ENCODE measurements at regions of chr9 and their contacts with region 1.

Region 1: DNA sequence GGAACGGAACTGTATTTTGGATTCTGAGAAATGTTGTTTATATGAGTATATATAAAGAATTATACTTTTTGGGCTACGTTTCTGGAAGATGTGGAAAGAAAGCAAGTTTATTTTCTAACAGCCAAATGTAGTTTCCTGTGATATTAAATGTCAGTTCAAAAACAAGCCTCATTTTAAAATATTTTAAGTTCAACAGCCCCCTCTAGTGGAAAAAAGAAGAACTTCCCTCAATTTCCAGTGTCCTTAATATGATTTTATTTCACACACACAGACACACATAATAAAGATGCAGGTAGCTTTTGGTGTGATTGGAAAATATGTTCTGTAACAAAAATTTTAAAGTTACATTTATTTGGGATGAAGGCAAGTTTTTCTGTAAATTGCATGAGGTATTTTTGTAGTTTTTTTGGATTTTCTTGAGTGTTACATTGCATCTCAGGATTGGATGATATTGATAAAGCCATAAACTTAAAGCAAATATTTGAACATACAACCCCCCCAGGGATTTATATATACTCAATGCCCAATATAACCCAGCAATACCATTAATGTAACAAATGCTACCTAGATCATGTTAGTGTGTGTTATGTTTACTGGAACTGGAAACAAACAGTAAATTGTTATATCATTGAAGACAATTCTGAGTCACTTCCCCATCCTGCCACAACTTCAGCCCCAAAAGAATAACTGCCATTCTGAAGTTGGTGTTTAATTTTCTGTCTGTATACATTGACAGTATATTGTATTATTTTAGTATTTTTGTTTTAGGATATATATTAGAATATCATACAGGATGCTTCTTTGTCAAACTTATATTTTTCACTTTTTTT is 54.0 kb downstream of the CCDC171 start:
- DNase-seq: peak; percentile 11 to 47 (median 14)
- H3K4me3 ChIP-seq: no peak overlapping the region
- H3K4me3 Mint-ChIP-seq: no peak overlapping the region
- H3K27ac ChIP-seq: no peak overlapping the region
- H3K27ac Mint-ChIP-seq: no peak overlapping the region
- H3K4me1 ChIP-seq: no peaks in the 10 kb centered on the region
- H3K4me1 Mint-ChIP-seq: peaks cover 1% of the 10 kb centered on the region
- H3K27me3 ChIP-seq: no peaks in the 10 kb centered on the region
- H3K27me3 Mint-ChIP-seq: peaks cover 0 to 1% (median 0%) of the 10 kb centered on the region in 3 donors
- CTCF ChIP-seq: peak; percentile 82

Region 2: DNA sequence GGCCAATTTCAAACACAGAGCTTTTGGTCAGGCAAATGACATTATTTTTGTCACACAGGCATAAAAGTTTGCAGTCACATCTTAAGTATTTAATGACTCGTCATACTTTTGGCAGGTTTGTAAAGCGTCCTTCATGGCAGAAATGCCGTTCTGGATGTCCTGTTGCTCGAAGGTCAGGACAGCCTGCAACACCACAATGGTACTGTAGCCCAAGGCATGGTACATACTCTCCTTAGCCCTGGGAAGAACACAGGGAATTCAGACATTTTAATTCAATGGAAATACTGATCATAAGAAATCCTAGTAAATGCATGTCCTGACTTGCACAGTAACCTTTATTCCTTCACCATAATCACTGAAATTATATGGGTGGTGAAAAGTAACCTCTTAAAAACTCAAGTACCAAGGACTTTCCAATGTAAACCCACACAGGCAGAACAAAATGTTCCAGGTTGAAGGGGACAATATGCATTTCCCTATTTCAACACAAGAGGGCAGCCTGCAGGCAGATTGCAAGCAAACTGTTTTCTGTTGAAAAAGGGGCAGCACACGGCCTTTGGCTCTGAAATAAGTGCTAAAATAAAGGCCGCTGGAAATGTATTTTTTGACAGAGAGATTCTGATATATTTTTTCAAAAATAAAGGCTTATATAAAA is 395.6 kb before region 1 on chr9:
- intact Hi-C with region 1: loop called in 1 of 2 experiments (anchors 10 kb)
- DNase-seq: peak; percentile 20 to 43 (median 29)
- H3K4me3 ChIP-seq: no peak overlapping the region
- H3K4me3 Mint-ChIP-seq: no peak overlapping the region
- H3K27ac ChIP-seq: no peak overlapping the region
- H3K27ac Mint-ChIP-seq: no peak overlapping the region
- H3K4me1 ChIP-seq: no peaks in the 10 kb centered on the region
- H3K4me1 Mint-ChIP-seq: no peaks in the 10 kb centered on the region
- H3K27me3 ChIP-seq: no peaks in the 10 kb centered on the region
- H3K27me3 Mint-ChIP-seq: no peaks in the 10 kb centered on the region
- CTCF ChIP-seq: peak; percentile 97

Region 3: DNA sequence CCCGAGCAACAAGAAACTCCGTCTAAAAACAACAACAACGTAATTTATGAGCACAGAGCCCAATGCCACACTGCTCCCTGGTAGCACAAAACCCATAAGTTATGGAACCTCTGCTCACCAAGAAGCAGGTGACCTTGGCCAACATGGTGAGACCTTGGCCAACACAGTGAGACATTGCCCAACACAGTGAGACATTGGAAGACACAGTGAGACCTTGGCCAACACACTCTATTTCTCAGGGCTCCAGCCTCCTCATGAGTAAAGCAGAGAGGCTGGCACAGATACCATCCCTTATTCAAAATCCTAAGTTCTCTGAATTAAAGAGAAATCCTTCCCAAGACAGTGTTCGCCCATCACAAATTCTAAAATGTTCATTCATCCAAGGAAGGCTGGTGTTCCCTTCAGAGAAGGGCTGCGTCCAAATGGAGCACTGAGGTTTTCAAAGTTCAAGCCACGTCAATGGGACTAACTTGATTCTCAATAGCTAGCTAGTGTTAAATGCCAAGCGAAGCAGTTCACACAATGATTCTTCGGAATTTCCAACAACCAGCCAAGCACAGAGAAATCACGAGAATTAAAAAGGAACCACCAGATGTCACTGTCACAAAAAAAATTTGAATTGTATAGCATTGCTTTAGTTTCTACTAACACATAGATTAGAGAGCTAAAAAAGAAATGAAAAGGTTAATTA is 329.3 kb before region 1 on chr9:
- intact Hi-C with region 1: loop called (anchors 5 to 10 kb)
- DNase-seq: peak in 1 of 3 donors; percentile 11
- H3K4me3 ChIP-seq: no peak overlapping the region
- H3K4me3 Mint-ChIP-seq: no peak overlapping the region
- H3K27ac ChIP-seq: no peak overlapping the region
- H3K27ac Mint-ChIP-seq: no peak overlapping the region
- H3K4me1 ChIP-seq: no peaks in the 10 kb centered on the region
- H3K4me1 Mint-ChIP-seq: peaks cover 3% of the 10 kb centered on the region
- H3K27me3 ChIP-seq: no peaks in the 10 kb centered on the region
- H3K27me3 Mint-ChIP-seq: peaks cover 0 to 3% (median 0%) of the 10 kb centered on the region in 3 donors
- CTCF ChIP-seq: peak; percentile 51

Region 4: GRCh38 chr9:15317836-15318235 is 289.0 kb before region 1 on chr9:
- intact Hi-C with region 1: no loop called
- DNase-seq: no peak
- H3K4me3 ChIP-seq: no peak overlapping the region
- H3K4me3 Mint-ChIP-seq: no peak overlapping the region
- H3K27ac ChIP-seq: no peak overlapping the region
- H3K27ac Mint-ChIP-seq: no peak overlapping the region
- H3K4me1 ChIP-seq: no peaks in the 10 kb centered on the region
- H3K4me1 Mint-ChIP-seq: no peaks in the 10 kb centered on the region
- H3K27me3 ChIP-seq: no peaks in the 10 kb centered on the region
- H3K27me3 Mint-ChIP-seq: no peaks in the 10 kb centered on the region
- CTCF ChIP-seq: no peak

Region 5: GRCh38 chr9:15510789-15511575 is 95.9 kb before region 1 on chr9 and contains the start of gene PSIP1:
- intact Hi-C with region 1: loop called in 1 of 2 experiments (anchors 10 kb)
- DNase-seq: peak; percentile 71 to 79 (median 78)
- H3K4me3 ChIP-seq: peak within 1 kb of the TSS; percentile 86 to 97 (median 92)
- H3K4me3 Mint-ChIP-seq: peak within 1 kb of the TSS; percentile 97 to 98
- H3K27ac ChIP-seq: peak within 1 kb of the TSS; percentile 80 to 98
- H3K27ac Mint-ChIP-seq: peak within 1 kb of the TSS; percentile 97 to 100 (median 100)
- H3K4me1 ChIP-seq: peaks cover 17 to 27% of the 10 kb centered on the region in 2 donors
- H3K4me1 Mint-ChIP-seq: peaks cover 31% of the 10 kb centered on the region
- H3K27me3 ChIP-seq: no peaks in the 10 kb centered on the region
- H3K27me3 Mint-ChIP-seq: no peaks in the 10 kb centered on the region
- CTCF ChIP-seq: no peak
- polyA plus RNA-seq, gene PSIP1: 14.7 to 20.2 (median 19.8) TPM

Measured in CD14-positive monocyte (primary cell).